Head of caudate nucleus (tissue), 42 donors: ENCODE measurements at regions of chr14 and their contacts with region 1.

Region 1: DNA sequence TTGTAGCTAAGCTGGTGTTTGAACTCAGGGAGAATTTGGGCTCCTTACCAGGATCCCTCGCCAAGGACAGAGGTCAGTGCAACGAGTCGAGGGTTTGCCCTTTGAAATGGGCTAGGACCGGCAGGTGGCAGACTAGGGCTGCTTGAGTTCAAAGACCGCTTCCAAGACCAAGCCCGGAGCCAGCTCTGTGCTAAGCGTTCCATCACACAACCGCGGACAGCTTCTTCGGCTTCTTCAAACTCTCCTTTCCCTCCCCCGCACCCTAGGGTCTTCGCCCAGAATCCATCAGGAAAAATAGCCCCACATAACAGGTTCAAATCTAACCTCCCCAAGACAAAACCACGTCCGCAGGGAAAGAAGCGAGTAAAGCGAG is 705 bp upstream of the FLVCR2 start:
- DNase-seq: peak; percentile 78 to 95 (median 88)

Region 2: DNA sequence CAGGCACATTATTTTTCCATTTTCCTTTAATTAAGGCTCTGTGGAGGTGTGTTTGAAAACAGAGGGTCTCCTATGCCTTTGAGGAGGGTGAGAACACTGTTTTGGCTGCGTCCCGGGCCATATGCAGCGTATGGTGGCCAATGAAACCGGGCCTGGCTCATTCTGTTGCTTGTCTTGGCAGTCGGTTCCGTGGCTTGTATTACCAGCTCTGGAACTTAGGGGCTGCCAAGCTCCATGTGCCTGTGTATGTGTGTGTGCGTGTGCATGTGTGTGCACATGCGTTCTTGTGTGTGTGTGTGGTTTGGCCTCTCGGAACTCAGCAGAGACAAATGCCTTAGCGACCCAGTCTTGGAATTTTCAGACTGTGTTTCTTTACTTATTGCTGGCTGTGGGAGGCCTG is 147.2 kb before region 1 on chr14:
- intact Hi-C with region 1: no loop called
- DNase-seq: no peak

Region 3: DNA sequence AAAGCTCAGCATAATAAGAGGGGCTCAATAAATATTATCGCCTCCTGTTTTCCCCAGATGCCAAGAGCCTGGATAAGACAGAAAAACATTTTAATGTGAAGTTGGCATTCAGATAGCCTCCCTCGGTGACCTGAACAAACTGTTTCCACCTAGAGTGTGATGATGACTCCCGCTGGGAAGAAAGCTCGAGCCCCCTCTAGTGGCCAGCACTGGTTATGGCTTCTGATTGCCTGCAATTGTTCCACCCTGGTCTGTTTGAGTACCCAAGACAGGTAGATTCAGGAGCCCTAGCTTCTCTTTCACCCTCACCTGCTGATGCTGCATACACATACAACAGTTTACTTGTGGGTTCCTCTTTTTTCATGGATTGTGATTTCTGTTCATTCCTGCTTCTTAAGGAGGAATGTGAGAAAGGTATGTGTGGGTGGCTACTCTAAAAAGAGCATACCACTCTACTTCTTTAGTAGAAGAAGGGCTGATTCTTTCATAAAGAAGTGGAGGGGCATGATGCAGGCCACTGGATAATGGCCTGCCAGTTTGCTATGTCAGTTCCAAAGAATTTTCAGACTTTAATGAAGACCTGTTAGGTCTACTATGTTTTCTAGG is 76.5 kb after region 1 on chr14:
- intact Hi-C with region 1: loop called (anchors 2 kb)
- DNase-seq: peak; percentile 70 to 94 (median 87)